CD4-positive, alpha-beta memory T cell (primary cell): ENCODE measurements at regions of chr10 and their contacts with region 1.

Region 1: DNA sequence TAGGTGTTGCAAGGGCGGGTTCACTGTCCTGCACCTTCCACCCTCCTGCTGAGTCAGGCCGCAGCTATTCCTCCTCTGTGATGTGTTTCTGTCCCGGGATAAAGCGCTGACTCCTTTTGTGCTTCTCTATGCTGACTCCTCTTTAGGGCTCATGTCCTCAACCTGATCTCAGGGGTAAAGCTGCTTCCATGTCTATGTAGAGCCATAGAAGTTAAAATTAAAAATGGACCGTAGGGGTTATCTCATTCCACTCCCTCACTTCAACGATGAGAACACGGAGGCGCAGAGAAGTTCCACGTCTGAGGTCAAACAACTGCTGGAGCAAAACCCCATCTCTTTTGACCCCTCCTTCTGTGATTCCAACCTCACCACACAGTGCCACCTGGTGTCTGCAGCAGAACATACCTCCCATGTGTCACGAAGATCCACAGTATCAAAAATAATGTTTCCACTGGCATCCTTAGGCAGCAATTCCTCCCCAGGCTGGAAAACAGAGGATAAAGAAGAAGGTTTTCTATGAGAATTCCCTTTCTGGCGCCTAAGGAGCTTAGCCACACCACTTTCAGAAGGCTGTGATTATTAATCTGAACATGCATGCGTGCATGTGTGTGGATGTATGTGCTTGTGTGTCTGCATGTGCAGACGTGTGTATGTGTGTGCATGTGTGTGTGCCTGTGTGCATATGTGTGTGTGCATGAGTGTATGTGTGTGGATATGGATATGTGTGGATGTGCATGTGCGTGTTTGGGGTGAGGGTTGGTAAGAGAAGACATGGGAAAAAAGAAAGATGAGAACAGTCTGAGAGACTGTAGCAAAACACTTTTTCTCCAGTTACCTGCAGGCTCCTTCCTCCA is 81.2 kb upstream of the UCN3 start:
- DNase-seq: peak; percentile 47 to 64 (median 50)
- H3K4me3 ChIP-seq: no peak overlapping the region
- H3K4me3 Mint-ChIP-seq: peak overlapping the region in 5 of 8 donors; percentile 37 to 68 (median 50)
- H3K27ac ChIP-seq: peak overlapping the region; percentile 23
- H3K27ac Mint-ChIP-seq: peak overlapping the region in 6 of 7 donors; percentile 12 to 91 (median 35)
- H3K4me1 ChIP-seq: peaks cover 21% of the 10 kb centered on the region
- H3K4me1 Mint-ChIP-seq: peaks cover 14 to 35% (median 22%) of the 10 kb centered on the region in 4 donors
- H3K27me3 ChIP-seq: no peaks in the 10 kb centered on the region
- H3K27me3 Mint-ChIP-seq: peaks cover 0 to 7% of the 10 kb centered on the region in 2 donors

Region 2: DNA sequence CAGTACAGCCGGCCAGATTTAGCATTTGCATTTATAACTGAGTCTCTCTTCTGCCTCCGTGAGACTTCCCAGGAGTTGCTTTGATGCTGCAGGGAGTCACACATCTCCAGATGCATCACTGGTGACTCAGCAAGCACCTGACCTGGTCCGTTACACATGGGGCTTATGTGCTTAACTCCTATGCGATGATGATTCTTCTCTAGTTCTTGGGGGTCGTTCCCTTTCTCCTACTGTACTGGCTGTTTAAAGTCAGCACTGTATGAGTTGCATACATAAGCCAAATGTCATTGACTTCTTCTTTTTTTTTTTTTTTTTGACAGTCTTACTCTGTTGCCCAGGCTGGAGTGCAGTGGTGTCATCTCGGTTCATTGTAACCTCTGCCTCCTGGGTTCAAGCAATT is 470.5 kb before region 1 on chr10:
- CTCF ChIA-PET with region 1: interaction called, 16 read pairs
- POLR2A ChIA-PET with region 1: no interaction called
- intact Hi-C with region 1: no loop called
- DNase-seq: no peak
- H3K4me3 ChIP-seq: no peak overlapping the region
- H3K4me3 Mint-ChIP-seq: no peak overlapping the region
- H3K27ac ChIP-seq: no peak overlapping the region
- H3K27ac Mint-ChIP-seq: no peak overlapping the region
- H3K4me1 ChIP-seq: peaks cover 6% of the 10 kb centered on the region
- H3K4me1 Mint-ChIP-seq: no peaks in the 10 kb centered on the region
- H3K27me3 ChIP-seq: no peaks in the 10 kb centered on the region
- H3K27me3 Mint-ChIP-seq: peaks cover 11 to 13% of the 10 kb centered on the region in 2 donors

Region 3: DNA sequence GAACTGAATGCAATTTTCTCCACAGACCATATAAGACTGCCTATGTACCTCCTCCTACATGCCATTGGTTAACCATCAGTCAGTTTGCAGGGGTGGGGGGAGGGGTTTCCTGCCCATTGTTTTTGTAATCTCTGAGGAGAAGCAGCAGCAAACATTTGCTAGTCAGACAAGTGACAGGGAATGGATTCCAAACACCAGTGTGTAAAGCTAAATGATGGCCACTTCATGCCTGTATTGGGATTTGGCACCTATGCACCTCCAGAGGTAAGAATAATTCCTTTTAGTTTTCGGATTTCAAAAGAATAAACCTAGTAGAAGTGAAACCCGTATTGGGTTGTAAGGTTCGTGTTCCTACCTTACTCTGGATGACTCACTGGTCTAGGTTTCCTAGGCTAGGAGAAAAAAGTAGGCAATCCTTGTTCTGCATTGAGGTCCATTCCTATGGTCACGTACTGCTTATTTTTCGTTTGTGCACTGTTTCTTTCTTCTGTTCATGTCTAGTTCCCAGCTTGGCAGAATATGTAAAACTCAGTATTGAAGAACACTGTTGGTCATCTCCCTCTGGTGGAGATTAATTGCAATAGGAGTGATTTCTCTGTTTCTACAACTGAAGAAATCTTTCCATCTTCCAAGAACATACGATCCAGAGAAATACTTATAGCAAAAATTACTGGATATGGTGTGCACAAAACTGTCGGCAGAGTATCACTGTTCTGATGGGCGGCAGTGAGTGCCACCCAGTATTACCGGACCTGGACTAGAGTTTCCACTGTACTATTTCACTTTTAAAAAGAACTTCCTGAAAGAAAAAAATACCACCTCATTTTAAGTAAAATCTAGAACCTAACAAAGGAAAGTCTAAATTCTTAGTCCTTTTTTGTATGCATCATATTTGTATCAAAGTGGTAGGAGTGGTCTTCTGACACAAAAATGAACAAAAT is 189.0 kb before region 1 on chr10 and contains the start of gene AKR1C3:
- CTCF ChIA-PET with region 1: interaction called, 9 read pairs
- POLR2A ChIA-PET with region 1: interaction called, 4 read pairs
- intact Hi-C with region 1: loop called (anchors 1 kb)
- DNase-seq: peak in 4 of 5 donors; percentile 13 to 41 (median 23)
- H3K4me3 ChIP-seq: peak within 1 kb of the TSS; percentile 19 to 74
- H3K4me3 Mint-ChIP-seq: peak within 1 kb of the TSS; percentile 80 to 91 (median 86)
- H3K27ac ChIP-seq: peak within 1 kb of the TSS; percentile 22
- H3K27ac Mint-ChIP-seq: peak within 1 kb of the TSS in 6 of 7 donors; percentile 19 to 74 (median 56)
- H3K4me1 ChIP-seq: peaks cover 9% of the 10 kb centered on the region
- H3K4me1 Mint-ChIP-seq: peaks cover 6 to 10% (median 7%) of the 10 kb centered on the region in 4 donors
- H3K27me3 ChIP-seq: no peaks in the 10 kb centered on the region
- H3K27me3 Mint-ChIP-seq: peaks cover 3 to 11% of the 10 kb centered on the region in 2 donors
- total RNA-seq, gene AKR1C3: 3.4 to 4.0 TPM

Region 4: GRCh38 chr10:5293691-5294550 is 10.4 kb after region 1 on chr10:
- CTCF ChIA-PET with region 1: interaction called, 38 read pairs
- POLR2A ChIA-PET with region 1: interaction called, 24 read pairs
- intact Hi-C with region 1: loop called (anchors 1 kb)
- DNase-seq: peak; percentile 49 to 78 (median 66)
- H3K4me3 ChIP-seq: peak overlapping the region; percentile 54 to 70
- H3K4me3 Mint-ChIP-seq: peak overlapping the region; percentile 91 to 100 (median 98)
- H3K27ac ChIP-seq: peak overlapping the region; percentile 81
- H3K27ac Mint-ChIP-seq: peak overlapping the region; percentile 96 to 100 (median 98)
- H3K4me1 ChIP-seq: peaks cover 71% of the 10 kb centered on the region
- H3K4me1 Mint-ChIP-seq: peaks cover 53 to 92% (median 79%) of the 10 kb centered on the region in 4 donors
- H3K27me3 ChIP-seq: no peaks in the 10 kb centered on the region
- H3K27me3 Mint-ChIP-seq: no peaks in the 10 kb centered on the region

Region 5: DNA sequence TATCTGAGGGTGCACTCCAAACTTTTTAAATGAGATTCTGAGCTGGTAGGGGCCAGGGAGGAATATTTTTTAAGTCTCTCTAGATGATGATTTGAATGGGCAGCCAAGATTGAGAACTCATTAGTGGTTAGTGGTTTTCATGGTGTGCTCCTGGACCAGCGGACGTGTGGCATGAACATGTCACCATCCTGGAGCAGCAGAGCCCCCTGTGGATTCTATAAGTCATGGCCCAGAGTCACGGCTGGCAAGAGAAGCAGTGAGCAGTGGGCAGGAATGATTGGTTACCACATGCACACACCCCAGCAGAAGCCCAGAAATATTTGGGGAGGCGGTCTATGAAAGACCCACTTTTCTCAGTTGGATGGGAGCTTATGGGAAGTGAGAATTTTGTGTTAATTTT is 60.0 kb after region 1 on chr10:
- CTCF ChIA-PET with region 1: interaction called, 26 read pairs
- POLR2A ChIA-PET with region 1: no interaction called
- intact Hi-C with region 1: loop called (anchors 1 kb)
- DNase-seq: peak in 3 of 5 donors; percentile 3 to 19 (median 14)
- H3K4me3 ChIP-seq: no peak overlapping the region
- H3K4me3 Mint-ChIP-seq: no peak overlapping the region
- H3K27ac ChIP-seq: no peak overlapping the region
- H3K27ac Mint-ChIP-seq: no peak overlapping the region
- H3K4me1 ChIP-seq: no peaks in the 10 kb centered on the region
- H3K4me1 Mint-ChIP-seq: peaks cover 1 to 9% (median 5%) of the 10 kb centered on the region in 4 donors
- H3K27me3 ChIP-seq: no peaks in the 10 kb centered on the region
- H3K27me3 Mint-ChIP-seq: peaks cover 0 to 2% of the 10 kb centered on the region in 2 donors

Region 6: DNA sequence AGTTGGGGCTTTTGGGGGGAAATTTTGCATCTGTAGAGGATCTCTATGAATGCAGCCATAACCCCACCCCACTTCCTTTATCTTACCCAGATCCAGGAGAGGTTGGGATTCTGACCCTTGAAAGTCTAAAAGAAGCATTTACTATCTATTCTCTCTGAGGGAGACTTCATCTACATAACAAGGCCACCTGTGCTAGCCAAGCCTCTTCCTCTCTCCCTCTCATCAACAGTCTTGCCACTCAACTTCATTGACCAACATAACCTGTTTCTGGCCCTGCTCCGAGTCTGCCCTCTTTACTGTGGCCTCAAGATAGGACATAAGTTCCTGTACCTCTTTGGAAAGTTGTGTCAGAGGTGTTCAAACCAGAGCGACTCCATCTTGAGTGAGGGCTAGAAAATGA is 101.7 kb after region 1 on chr10:
- CTCF ChIA-PET with region 1: interaction called, 4 read pairs
- POLR2A ChIA-PET with region 1: no interaction called
- intact Hi-C with region 1: loop called (anchors 1 kb)
- DNase-seq: no peak
- H3K4me3 ChIP-seq: no peak overlapping the region
- H3K4me3 Mint-ChIP-seq: no peak overlapping the region
- H3K27ac ChIP-seq: no peak overlapping the region
- H3K27ac Mint-ChIP-seq: no peak overlapping the region
- H3K4me1 ChIP-seq: no peaks in the 10 kb centered on the region
- H3K4me1 Mint-ChIP-seq: peaks cover 0 to 2% (median 0%) of the 10 kb centered on the region in 4 donors
- H3K27me3 ChIP-seq: no peaks in the 10 kb centered on the region
- H3K27me3 Mint-ChIP-seq: peaks cover 2 to 9% of the 10 kb centered on the region in 2 donors

Region 7: DNA sequence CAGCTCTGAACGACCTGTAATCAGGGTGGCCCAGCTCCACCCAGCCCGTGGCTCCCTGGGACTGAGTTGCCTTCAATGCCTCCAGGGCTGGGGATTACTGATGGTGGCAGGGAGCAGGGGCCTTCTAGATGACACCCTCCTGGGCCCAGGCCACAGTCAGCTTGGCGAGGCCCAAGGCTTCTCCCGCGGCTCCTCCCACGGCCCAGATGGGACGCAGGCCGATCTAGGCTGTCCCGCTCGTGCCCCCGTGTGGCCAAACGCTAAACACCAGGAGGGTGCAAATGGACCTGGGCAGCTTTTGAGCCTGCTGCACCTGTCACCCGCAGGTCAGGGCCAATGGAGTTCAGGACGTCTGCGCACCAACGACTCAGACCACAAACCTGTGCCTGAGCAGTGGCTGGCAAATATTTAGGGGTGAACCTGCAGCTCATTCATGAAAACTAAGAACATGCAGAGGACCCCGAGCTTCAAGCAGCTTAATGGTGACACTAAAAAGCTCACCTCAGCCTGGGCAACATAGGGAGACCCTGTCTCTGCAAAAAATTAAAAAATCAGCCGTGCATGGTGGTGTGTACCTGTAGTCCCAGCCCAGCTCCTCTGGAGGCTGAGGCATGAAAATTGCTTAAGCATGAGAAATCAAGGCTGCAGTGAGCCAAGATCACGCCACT is 339.7 kb after region 1 on chr10:
- CTCF ChIA-PET with region 1: interaction called, 3 read pairs
- POLR2A ChIA-PET with region 1: no interaction called
- intact Hi-C with region 1: loop called (anchors 5 kb)
- DNase-seq: peak; percentile 68 to 75 (median 70)
- H3K4me3 ChIP-seq: no peak overlapping the region
- H3K4me3 Mint-ChIP-seq: no peak overlapping the region
- H3K27ac ChIP-seq: no peak overlapping the region
- H3K27ac Mint-ChIP-seq: no peak overlapping the region
- H3K4me1 ChIP-seq: no peaks in the 10 kb centered on the region
- H3K4me1 Mint-ChIP-seq: peaks cover 0 to 7% (median 3%) of the 10 kb centered on the region in 4 donors
- H3K27me3 ChIP-seq: no peaks in the 10 kb centered on the region
- H3K27me3 Mint-ChIP-seq: no peaks in the 10 kb centered on the region